ENCODE measurements at regions of chr9 and their contacts with region 1.

Region 1: DNA sequence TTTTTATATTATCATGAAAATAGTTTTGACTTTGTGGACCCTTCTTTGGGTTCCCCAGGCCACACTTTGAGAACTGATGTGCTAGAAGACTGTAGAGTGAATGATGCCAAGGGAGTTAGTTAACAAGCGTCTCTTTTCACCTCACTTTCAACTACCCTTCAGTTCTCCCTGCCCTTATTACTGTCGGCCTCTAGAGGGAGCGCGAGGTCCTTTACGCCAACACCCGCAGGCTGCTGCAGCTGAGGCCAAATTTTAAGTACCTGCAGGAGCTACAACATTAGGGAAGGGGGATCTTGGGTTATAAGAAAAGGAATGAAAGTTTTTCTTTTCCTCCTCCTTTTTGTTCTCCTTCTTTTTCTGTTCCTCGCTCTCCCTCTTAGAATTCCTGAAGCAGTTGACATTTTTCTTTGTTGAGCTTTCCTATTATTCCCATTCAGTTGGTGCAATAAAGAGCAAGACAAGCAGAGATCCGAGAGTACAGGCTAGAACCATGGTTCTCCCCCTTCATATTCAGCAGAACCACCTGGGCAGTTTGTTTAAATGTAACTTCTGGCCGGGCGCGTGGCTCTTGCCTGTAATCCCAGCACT is 84.0 kb downstream of the ZFAND5 start:
- DNase-seq: peak; percentile 89
- H3K4me3 ChIP-seq: no peak overlapping the region
- H3K27ac ChIP-seq: no peak overlapping the region
- H3K4me1 ChIP-seq: no peaks in the 10 kb centered on the region
- H3K27me3 ChIP-seq: no peaks in the 10 kb centered on the region
- CTCF ChIP-seq: peak; percentile 70 to 93 (median 83)
- POLR2A ChIP-seq: no peak

Region 2: GRCh38 chr9:71783120-71783530 is 497.9 kb before region 1 on chr9:
- intact Hi-C with region 1: no loop called
- DNase-seq: peak; percentile 93
- H3K4me3 ChIP-seq: no peak overlapping the region
- H3K27ac ChIP-seq: peak overlapping the region; percentile 68 to 91 (median 80)
- H3K4me1 ChIP-seq: peaks cover 5 to 43% (median 23%) of the 10 kb centered on the region in 6 donors
- H3K27me3 ChIP-seq: no peaks in the 10 kb centered on the region
- CTCF ChIP-seq: peak in 4 of 11 experiments; percentile 11 to 28 (median 19)
- POLR2A ChIP-seq: peak in 1 of 3 donors; percentile 31

Region 3: GRCh38 chr9:72592502-72593403 is 311.7 kb after region 1 on chr9:
- intact Hi-C with region 1: loop called (anchors 5 kb)
- DNase-seq: no peak
- H3K4me3 ChIP-seq: no peak overlapping the region
- H3K27ac ChIP-seq: peak overlapping the region in 3 of 8 donors; percentile 10 to 65 (median 63)
- H3K4me1 ChIP-seq: peaks cover 0 to 60% (median 21%) of the 10 kb centered on the region in 6 donors
- H3K27me3 ChIP-seq: no peaks in the 10 kb centered on the region
- CTCF ChIP-seq: peak; percentile 54 to 86 (median 77)
- POLR2A ChIP-seq: no peak

Region 4: DNA sequence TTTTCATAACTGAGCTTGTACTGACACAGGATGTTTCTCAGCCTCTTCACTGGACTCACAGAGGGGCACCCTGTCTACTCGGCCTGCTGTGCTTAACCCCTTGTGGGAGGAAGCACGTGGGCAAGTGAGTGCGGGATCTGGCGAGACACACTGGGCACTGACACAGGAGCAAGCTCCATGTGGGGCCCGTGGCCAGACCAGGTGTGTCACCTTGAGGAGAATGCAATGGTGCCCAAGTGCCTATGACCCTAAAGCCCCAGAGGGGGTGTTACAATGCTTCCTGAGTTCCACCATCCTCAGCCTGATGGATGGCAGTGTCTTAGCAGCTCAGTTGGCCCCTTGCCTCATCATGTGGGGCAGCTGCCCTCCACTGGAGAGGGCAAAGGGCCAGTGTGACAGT is 543.0 kb after region 1 on chr9:
- intact Hi-C with region 1: loop called (anchors 5 kb)
- DNase-seq: no peak
- H3K4me3 ChIP-seq: no peak overlapping the region
- H3K27ac ChIP-seq: no peak overlapping the region
- H3K4me1 ChIP-seq: no peaks in the 10 kb centered on the region
- H3K27me3 ChIP-seq: peaks cover 0 to 7% (median 0%) of the 10 kb centered on the region in 7 donors
- CTCF ChIP-seq: no peak
- POLR2A ChIP-seq: no peak